AG04449 (cell line): ENCODE measurements at regions of chr20 and their contacts with region 1.

Region 1: DNA sequence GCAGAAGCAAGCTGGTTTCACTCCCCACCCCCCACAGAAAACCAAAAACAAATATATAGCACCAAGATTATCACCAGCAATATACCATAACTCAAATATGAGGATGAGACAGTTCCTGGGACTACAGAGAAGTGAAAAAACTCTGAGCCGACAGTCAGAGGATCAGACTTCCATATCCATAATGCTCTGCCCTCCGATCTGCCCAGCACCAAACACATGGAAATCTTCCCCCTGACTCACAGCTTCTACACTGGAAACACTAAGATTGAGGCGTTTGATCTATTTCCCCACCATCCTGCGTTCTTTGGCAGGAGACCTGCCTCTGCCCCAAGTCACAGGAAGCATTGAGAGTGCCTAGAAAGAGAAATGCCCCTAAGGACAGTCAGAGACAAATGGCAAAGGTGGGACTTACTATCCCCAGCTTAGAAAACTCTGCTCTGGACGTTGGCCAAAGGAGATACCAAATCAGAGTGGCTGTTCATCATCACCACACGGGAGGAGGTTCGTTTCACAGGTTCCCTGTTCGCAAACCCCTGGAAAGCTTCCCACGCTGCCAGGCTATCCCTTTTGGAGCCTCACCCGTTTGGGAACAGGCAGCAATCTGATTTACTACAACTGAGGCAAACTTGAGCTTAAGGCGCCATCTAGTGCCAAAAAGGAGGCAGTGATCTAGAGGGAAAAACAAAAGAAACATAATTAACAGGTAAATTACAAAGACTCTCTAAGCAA is 48.7 kb upstream of the SRSF6 start:
- DNase-seq: no peak
- H3K4me3 ChIP-seq: no peak overlapping the region
- CTCF ChIP-seq: peak; percentile 68

Region 2: DNA sequence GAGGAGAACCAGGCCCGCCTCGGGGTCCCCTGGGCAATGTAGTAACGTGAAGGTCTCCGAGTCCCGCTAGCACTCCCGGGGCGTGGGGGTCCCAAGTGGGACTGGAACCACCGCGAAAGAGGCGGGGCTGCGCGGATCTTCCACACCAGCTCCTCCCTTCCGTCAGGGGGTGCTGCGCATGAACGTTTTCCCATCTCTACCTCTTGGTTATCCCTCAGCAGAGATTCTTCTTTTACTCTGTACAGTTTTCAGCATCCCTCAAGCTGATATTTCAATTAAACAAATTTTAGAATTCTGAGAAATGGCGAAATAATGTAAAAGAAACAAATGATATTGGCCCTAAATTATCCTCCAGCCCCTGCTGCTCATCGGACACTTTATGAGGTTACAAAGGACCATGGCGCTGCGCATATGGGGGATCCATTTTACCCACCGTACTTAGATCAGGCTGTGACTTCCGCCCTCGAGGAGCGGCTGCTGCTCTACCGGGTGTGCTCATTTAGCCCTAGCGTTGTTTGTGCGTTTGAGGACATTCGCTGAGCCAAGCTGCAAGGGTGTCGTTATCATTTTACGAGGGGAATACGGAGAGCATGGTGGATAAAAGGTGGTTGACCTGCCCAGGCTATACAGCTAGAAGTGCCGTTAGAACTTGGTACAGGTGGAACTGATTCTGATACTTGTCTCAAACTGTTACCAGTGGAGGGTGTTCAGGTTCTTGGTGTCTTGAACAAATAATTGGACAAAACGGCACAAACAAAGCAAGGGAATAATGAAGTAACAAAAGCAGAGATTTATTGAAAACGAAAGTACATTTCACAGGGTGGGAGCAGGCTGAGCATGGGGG is 1715.7 kb before region 1 on chr20:
- CTCF ChIA-PET with region 1: interaction called, 17 read pairs
- POLR2A ChIA-PET with region 1: no interaction called
- DNase-seq: peak; percentile 29
- H3K4me3 ChIP-seq: peak overlapping the region; percentile 80
- CTCF ChIP-seq: peak; percentile 36

Region 3: GRCh38 chr20:43187476-43188233 is 221.4 kb before region 1 on chr20:
- CTCF ChIA-PET with region 1: interaction called, 23 read pairs
- POLR2A ChIA-PET with region 1: no interaction called
- DNase-seq: peak; percentile 9
- H3K4me3 ChIP-seq: no peak overlapping the region
- CTCF ChIP-seq: peak; percentile 82

Region 4: DNA sequence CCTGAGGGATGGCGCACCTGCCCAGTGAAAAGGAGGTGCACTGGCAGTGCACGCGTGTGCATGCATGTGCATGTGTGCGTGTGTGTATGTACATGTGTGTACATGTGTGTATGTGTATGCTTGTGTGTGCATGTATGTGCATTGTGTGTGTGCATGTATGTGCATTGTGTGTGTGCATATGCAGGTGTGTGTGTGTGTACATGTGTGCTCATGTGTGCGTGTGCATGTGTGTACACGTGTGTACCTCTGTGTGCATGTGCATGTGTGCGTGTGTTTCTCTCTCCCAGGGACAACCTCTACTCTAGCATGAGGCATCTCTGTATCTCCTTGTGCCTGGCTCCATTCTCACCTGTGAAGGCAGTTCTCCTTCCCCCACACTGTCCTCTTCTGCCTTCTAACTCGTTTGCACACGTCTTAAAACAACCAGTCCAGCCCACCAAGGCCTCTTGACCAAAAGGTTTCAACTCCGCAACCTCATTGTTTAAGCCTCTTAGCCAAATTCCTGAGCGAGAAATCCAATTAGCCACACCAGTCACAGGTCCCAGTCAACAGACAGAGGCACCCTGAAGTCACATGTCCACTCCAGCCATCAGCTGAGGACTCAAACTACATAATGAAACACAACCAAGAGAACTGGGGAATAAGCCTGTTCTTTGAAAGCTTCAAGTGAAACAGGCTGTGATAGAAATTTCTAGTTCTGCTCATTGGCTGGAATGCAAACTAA is 115.8 kb before region 1 on chr20:
- CTCF ChIA-PET with region 1: interaction called, 13 read pairs
- POLR2A ChIA-PET with region 1: no interaction called
- DNase-seq: no peak
- H3K4me3 ChIP-seq: no peak overlapping the region
- CTCF ChIP-seq: no peak

Region 5: DNA sequence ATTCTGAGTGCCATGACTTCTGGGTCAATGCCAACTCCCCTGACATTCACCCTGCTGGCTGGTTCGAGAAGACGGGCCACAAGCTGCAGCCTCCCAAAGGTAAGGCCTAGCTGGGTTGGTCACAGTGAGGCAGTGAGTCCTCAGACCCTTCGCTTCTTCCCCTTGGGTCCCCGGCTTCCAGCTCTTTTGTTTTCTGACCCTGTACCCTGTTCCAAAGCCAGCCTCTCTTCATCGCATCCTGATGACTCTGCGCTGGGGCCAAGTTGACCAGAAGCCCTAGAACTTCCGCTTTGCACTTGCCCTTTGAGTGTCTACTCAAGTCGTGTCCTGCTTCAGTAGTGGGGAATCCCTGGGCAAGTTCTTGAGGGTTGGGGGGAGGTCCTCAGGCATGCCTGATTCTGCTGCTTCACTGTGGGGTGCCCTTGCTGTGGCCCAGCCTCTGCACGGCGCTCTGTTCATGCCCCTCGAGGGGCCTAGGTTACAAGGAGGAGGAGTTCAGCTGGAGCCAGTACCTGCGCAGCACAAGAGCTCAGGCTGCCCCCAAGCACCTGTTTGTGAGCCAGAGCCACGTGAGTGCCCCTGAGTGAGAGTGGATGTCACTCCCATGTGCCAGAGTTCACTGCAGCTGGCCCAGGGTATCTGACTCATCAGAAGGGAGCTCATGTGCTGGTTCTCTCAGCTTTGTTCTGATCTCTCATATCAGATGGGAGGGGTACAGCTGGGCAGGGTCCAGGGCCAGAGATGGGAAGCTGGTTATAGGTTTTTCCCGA is 121.5 kb after region 1 on chr20:
- CTCF ChIA-PET with region 1: no interaction called
- POLR2A ChIA-PET with region 1: no interaction called
- DNase-seq: no peak
- H3K4me3 ChIP-seq: no peak overlapping the region
- CTCF ChIP-seq: no peak